G401 (cell line): ENCODE measurements at regions of chr4 and their contacts with region 1.

Region 1: GRCh38 chr4:10123227-10124101 is 6.9 kb upstream of the WDR1 start:
- DNase-seq: no peak

Region 2: DNA sequence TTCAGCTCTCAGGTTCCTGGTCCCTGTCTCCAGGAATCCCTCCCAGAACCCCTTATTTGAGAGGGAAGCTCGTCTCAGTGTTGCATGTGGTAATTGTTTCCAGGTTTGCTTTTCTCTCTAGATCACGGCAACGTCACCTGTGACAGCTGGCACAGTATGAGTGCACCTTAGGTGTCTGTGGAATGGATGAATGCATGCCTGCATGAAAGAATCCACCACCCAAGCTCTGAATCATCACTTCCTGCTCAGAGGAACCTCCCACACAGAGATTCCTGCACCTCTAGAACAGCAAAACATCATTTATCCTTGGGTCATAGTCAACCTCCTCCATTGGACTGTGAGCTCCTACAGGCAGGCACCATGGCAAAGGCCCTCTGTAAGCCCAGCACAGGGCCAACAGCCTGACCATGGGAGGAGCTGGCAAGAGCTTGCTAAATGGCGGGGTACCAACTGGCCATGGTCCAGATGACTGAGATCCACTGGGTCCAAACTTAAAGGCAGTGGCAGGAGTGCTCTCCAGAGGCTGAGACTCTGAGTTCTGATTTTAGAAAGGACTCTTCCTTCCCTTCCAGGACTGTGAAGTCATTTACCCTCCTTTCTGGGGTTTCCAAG is 218.4 kb before region 1 on chr4:
- in situ Hi-C with region 1: no loop called
- DNase-seq: no peak

Region 3: DNA sequence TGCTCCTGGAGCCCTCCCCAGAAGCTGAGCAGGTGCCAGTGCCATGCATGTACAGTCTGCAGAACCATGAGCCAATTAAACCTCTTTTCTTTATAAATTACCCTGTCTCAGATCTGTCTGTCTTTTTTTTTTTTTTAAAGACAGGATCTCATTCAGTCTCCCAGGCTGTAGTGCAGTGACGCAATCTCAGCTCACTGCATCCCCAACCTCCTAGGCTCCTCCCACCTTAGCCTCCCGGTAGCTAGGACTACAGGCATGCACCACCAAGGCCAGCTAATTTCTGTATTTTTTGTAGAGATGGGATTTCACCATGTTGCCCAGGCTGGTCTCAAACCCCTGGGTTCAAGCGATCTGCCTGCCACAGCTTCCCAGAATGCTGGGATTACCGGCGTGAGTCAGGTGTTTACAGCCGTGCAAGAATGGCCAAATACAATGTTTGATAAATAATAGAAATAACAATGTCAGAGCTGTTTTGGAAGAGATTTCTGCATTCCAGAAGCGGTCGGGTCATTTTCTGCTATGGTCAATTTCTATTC is 171.0 kb before region 1 on chr4:
- in situ Hi-C with region 1: no loop called
- DNase-seq: no peak

Region 4: DNA sequence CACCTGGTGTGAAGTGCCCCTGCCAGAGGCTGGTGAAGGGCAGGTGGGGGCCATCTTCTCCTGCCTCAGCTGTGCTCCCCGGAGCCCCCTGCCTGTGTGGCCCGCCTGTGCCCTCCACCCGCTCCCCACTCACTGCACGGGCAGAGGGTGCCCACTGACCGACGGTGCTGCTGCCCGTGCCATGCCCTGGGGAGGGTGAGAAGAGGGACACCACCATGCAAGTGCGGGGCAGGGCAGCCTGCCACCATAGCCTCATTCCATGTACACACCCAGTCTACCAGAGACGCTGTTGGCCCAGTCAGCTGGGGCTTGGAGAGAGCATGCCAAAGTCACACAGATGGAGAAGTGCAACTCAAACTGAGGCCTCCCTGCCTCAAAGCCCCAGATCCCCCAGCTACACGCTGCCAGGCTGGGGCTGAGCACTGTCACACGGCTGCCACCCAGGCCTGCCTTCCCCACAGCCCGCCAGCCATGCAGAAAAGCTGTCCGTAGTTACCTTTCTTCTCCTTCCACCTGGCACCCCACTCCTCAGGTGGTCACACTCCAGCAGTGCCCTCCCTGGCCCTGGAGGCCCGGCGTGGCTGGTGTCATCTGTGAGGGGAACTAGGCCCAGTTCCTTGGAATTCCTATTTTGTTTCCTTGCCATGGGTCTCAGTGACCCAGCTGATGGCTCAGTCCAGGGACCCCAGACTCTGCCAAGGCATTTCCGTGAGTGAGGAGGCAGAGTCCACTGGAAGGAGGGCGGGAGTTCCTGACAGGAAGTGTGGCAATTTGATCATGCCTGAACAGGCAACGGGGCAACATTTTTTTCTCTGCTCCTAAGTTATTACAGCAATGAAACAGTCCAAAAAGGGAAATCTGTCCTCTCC is 102.4 kb before region 1 on chr4 and contains the start of gene SLC2A9:
- in situ Hi-C with region 1: loop called (anchors 10 kb)
- DNase-seq: no peak
- total RNA-seq, gene SLC2A9: not detected in 2 replicates

Region 5: GRCh38 chr4:10506077-10506476 is 382.6 kb after region 1 on chr4:
- in situ Hi-C with region 1: no loop called
- DNase-seq: no peak